Sigmoid colon (tissue), 7 donors: ENCODE measurements at regions of chr1 and their contacts with region 1.

Region 1: GRCh38 chr1:205812878-205813754 is at the start of gene SLC41A1:
- DNase-seq: peak; percentile 98
- H3K4me3 ChIP-seq: peak within 1 kb of the TSS; percentile 64 to 95 (median 90)
- H3K27ac ChIP-seq: peak within 1 kb of the TSS; percentile 86 to 96 (median 94)
- H3K4me1 ChIP-seq: peaks cover 0 to 49% (median 45%) of the 10 kb centered on the region in 4 donors
- H3K27me3 ChIP-seq: no peaks in the 10 kb centered on the region
- CTCF ChIP-seq: no peak
- EP300 ChIP-seq: peak in 2 of 4 donors; percentile 11 to 32
- POLR2A ChIP-seq: peak; percentile 59 to 66
- total RNA-seq, gene SLC41A1: 11.4 to 46.3 (median 14.8) TPM

Region 2: DNA sequence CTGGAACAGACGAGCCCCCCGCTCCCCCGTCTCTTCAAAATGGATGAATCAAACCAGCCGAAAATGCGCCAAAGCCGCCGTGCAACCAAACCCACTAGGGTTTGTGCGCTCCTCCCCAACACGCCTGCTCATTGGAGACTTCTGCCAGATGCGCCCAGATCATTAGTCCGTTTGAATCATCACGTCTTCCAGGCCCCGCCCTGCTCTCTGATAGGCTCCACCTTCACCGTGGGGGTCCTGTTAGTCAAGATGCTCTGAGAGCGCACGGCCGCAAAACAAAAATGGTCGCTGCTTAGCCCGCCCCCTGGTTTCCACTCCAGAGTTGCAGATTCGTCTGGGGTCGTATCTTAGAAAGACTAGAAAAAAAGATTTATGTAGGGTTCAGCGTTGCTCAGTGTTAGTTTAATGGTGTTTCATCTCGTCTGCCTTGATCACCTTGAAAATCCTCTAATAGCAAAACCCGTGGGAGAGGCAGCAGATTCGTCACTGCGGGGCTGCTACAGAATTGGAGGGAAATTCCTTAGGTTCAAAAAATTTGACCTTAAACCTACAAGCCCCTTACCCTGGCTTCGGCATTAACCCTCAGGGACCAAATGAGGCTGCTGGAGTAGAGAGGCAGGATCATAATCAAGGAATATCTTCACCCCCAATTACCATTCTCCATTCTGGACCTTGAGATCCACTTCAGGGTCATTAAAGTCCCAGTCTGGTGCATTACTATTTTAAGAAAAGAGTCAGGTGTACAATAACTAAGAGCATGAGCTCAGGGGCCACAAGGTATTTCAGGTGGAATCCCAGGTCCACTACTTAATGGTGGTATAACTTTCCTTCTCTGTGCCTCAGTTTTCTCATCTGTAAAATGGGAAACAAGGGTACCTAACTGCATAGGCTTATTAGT is 62.7 kb before region 1 on chr1 and contains the start of gene NUCKS1:
- intact Hi-C with region 1: loop called (anchors 2 kb)
- DNase-seq: peak; percentile 100
- H3K4me3 ChIP-seq: peak within 1 kb of the TSS; percentile 75 to 98 (median 91)
- H3K27ac ChIP-seq: peak within 1 kb of the TSS; percentile 99 to 100 (median 99)
- H3K4me1 ChIP-seq: peaks cover 0 to 36% (median 26%) of the 10 kb centered on the region in 4 donors
- H3K27me3 ChIP-seq: no peaks in the 10 kb centered on the region
- CTCF ChIP-seq: peak in 1 of 4 experiments; percentile 18
- EP300 ChIP-seq: no peak
- POLR2A ChIP-seq: peak; percentile 47 to 56
- total RNA-seq, gene NUCKS1: 88.9 to 112 (median 98.5) TPM

Region 3: GRCh38 chr1:205775015-205775716 is 38.0 kb before region 1 on chr1 and contains the start of gene RAB29:
- intact Hi-C with region 1: loop called (anchors 2 kb)
- DNase-seq: peak; percentile 92
- H3K4me3 ChIP-seq: peak within 1 kb of the TSS; percentile 50 to 86 (median 74)
- H3K27ac ChIP-seq: peak within 1 kb of the TSS; percentile 49 to 80 (median 70)
- H3K4me1 ChIP-seq: peaks cover 0 to 17% (median 9%) of the 10 kb centered on the region in 4 donors
- H3K27me3 ChIP-seq: no peaks in the 10 kb centered on the region
- CTCF ChIP-seq: no peak
- EP300 ChIP-seq: no peak
- POLR2A ChIP-seq: peak in 1 of 2 donors; percentile 44
- total RNA-seq, gene RAB29: 19.8 to 28.5 (median 23.2) TPM